CD8-positive, alpha-beta T cell (primary cell): ENCODE measurements at regions of chr12 and their contacts with region 1.

Region 1: GRCh38 chr12:54411391-54412241 is 7.5 kb downstream of the ITGA5 start:
- DNase-seq: peak in 7 of 9 experiments; percentile 36 to 74 (median 65)
- ATAC-seq: peak; percentile 39
- H3K4me3 ChIP-seq: peak overlapping the region in 1 of 2 experiments; percentile 82
- H3K4me3 Mint-ChIP-seq: peak overlapping the region; percentile 76
- H3K27ac ChIP-seq: peak overlapping the region; percentile 92 to 98
- H3K27ac Mint-ChIP-seq: peak overlapping the region; percentile 97
- H3K4me1 ChIP-seq: peaks cover 61% of the 10 kb centered on the region
- H3K4me1 Mint-ChIP-seq: peaks cover 72% of the 10 kb centered on the region
- H3K27me3 ChIP-seq: no peaks in the 10 kb centered on the region
- H3K27me3 Mint-ChIP-seq: no peaks in the 10 kb centered on the region
- CTCF ChIP-seq: no peak

Region 2: GRCh38 chr12:54279866-54280467 is 131.6 kb before region 1 on chr12 and contains the start of gene CBX5:
- CTCF ChIA-PET with region 1: no interaction called
- POLR2A ChIA-PET with region 1: interaction called, 5 read pairs
- intact Hi-C with region 1: loop called in 1 of 2 experiments (anchors 2 kb)
- DNase-seq: peak; percentile 99 to 100 (median 100)
- ATAC-seq: peak; percentile 47
- H3K4me3 ChIP-seq: peak within 1 kb of the TSS; percentile 83 to 93
- H3K4me3 Mint-ChIP-seq: no peak within 1 kb of the TSS
- H3K27ac ChIP-seq: peak within 1 kb of the TSS; percentile 92 to 100
- H3K27ac Mint-ChIP-seq: no peak within 1 kb of the TSS
- H3K4me1 ChIP-seq: peaks cover 52% of the 10 kb centered on the region
- H3K4me1 Mint-ChIP-seq: peaks cover 14% of the 10 kb centered on the region
- H3K27me3 ChIP-seq: no peaks in the 10 kb centered on the region
- H3K27me3 Mint-ChIP-seq: no peaks in the 10 kb centered on the region
- CTCF ChIP-seq: no peak
- total RNA-seq, gene CBX5: 26.1 to 26.7 TPM

Region 3: GRCh38 chr12:54431911-54432814 is 20.5 kb after region 1 on chr12:
- CTCF ChIA-PET with region 1: interaction called, 1,006 read pairs
- POLR2A ChIA-PET with region 1: interaction called, 6 read pairs
- intact Hi-C with region 1: no loop called
- DNase-seq: peak in 1 of 9 experiments; percentile 21
- ATAC-seq: no peak
- H3K4me3 ChIP-seq: no peak overlapping the region
- H3K4me3 Mint-ChIP-seq: no peak overlapping the region
- H3K27ac ChIP-seq: no peak overlapping the region
- H3K27ac Mint-ChIP-seq: no peak overlapping the region
- H3K4me1 ChIP-seq: peaks cover 14% of the 10 kb centered on the region
- H3K4me1 Mint-ChIP-seq: peaks cover 44% of the 10 kb centered on the region
- H3K27me3 ChIP-seq: no peaks in the 10 kb centered on the region
- H3K27me3 Mint-ChIP-seq: no peaks in the 10 kb centered on the region
- CTCF ChIP-seq: no peak

Region 4: GRCh38 chr12:54497883-54498282 is 86.3 kb after region 1 on chr12:
- CTCF ChIA-PET with region 1: no interaction called
- POLR2A ChIA-PET with region 1: no interaction called
- intact Hi-C with region 1: loop called in 1 of 2 experiments (anchors 5 kb)
- DNase-seq: no peak
- ATAC-seq: no peak
- H3K4me3 ChIP-seq: peak overlapping the region; percentile 86 to 88
- H3K4me3 Mint-ChIP-seq: peak overlapping the region; percentile 99
- H3K27ac ChIP-seq: peak overlapping the region; percentile 57 to 79
- H3K27ac Mint-ChIP-seq: peak overlapping the region; percentile 98
- H3K4me1 ChIP-seq: peaks cover 36% of the 10 kb centered on the region
- H3K4me1 Mint-ChIP-seq: peaks cover 43% of the 10 kb centered on the region
- H3K27me3 ChIP-seq: no peaks in the 10 kb centered on the region
- H3K27me3 Mint-ChIP-seq: no peaks in the 10 kb centered on the region
- CTCF ChIP-seq: no peak